Keratinocyte (primary cell): ENCODE measurements at regions of chr11 and their contacts with region 1.

Region 1: GRCh38 chr11:129930296-129930695 is 34.9 kb upstream of the NFRKB start:
- DNase-seq: no peak
- H3K4me3 ChIP-seq: no peak overlapping the region
- H3K27ac ChIP-seq: no peak overlapping the region
- H3K4me1 ChIP-seq: peaks cover 24% of the 10 kb centered on the region
- H3K27me3 ChIP-seq: no peaks in the 10 kb centered on the region
- CTCF ChIP-seq: no peak

Region 2: DNA sequence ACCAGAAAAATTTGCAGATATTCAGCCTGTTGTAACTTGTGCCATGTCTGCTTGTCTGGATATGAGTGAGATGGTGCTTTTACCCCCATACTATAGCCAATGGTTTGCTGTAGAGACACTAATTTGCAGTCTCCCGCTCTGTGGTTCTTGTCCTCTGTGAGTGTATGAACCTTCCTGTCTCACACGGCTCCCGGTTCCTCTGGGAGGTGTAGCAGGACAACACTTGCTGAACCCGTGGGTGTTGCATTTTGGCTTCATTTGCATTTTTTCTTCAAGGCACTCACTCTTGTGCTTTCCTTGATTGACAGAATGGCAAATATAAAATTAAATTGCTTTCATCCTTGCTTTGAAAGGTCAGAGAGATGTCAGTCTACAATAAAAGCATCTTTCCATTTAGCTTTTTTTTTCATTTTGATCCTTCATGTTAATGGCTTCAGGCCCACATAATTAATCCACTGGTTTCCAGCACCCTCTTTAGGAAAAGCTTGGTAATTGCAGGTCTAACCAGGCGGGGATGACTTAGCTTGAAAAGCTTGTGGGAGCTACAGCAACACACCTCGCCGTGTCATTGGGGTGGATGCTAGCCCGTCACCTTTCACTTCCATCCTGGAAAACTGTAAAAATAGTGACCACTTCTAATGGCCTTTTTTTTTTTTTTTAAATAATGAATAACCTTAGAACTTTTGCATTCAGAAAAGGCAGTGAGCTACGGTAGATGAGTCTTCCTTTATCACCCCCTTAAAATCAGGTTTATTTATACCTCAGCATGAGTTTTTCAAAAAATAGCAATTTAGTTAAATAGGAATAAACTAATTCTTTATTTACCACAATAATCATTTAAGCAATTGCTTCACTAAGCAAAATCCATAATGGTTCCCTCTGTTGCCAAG is 201.9 kb after region 1 on chr11:
- dilution Hi-C with region 1: loop called (anchors 25 kb)
- DNase-seq: no peak
- H3K4me3 ChIP-seq: no peak overlapping the region
- H3K27ac ChIP-seq: no peak overlapping the region
- H3K4me1 ChIP-seq: peaks cover 6% of the 10 kb centered on the region
- H3K27me3 ChIP-seq: no peaks in the 10 kb centered on the region
- CTCF ChIP-seq: peak; percentile 65 to 85 (median 66)

Region 3: DNA sequence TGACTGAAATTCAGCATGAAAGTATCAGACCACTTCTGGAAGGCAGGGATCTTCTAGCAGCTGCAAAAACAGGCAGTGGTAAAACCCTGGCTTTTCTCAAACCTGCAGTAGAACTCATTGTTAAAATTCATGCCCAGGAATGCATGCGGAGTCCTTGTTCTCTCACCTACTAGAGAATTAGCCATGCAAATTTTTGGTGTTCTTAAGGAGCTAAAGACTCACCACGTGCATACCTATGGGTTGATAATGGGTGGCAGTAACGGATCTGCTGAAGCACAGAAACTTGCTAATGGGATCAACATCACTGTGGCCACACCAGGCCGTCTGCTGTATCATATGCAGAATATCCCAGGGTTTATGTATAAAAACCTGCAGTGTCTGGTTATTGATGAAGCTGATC is 365.4 kb after region 1 on chr11:
- dilution Hi-C with region 1: no loop called
- DNase-seq: no peak
- H3K4me3 ChIP-seq: no peak overlapping the region
- H3K27ac ChIP-seq: no peak overlapping the region
- H3K4me1 ChIP-seq: no peaks in the 10 kb centered on the region
- H3K27me3 ChIP-seq: no peaks in the 10 kb centered on the region
- CTCF ChIP-seq: no peak